Activated CD4-positive, alpha-beta T cell treated with anti-CD3 and anti-CD28 coated beads, Interleukin-2, amount 10 ng/mL, durations not matched to agents 24 days and 14 days (primary cell): ENCODE measurements at regions of chr5 and their contacts with region 1.

Region 1: GRCh38 chr5:73565139-73565968 is at the starts of genes ANKRA2 and UTP15:
- DNase-seq: peak; percentile 100
- H3K4me3 Mint-ChIP-seq: peak within 1 kb of the TSS; percentile 100
- H3K27ac Mint-ChIP-seq: peak within 1 kb of the TSS; percentile 100
- H3K4me1 Mint-ChIP-seq: peaks cover 33% of the 10 kb centered on the region
- H3K27me3 Mint-ChIP-seq: peaks cover 2% of the 10 kb centered on the region
- total RNA-seq, gene ANKRA2: 18.5 and 19.7 TPM in 2 replicates
- total RNA-seq, gene UTP15: 59.3 and 61.5 TPM in 2 replicates

Region 2: DNA sequence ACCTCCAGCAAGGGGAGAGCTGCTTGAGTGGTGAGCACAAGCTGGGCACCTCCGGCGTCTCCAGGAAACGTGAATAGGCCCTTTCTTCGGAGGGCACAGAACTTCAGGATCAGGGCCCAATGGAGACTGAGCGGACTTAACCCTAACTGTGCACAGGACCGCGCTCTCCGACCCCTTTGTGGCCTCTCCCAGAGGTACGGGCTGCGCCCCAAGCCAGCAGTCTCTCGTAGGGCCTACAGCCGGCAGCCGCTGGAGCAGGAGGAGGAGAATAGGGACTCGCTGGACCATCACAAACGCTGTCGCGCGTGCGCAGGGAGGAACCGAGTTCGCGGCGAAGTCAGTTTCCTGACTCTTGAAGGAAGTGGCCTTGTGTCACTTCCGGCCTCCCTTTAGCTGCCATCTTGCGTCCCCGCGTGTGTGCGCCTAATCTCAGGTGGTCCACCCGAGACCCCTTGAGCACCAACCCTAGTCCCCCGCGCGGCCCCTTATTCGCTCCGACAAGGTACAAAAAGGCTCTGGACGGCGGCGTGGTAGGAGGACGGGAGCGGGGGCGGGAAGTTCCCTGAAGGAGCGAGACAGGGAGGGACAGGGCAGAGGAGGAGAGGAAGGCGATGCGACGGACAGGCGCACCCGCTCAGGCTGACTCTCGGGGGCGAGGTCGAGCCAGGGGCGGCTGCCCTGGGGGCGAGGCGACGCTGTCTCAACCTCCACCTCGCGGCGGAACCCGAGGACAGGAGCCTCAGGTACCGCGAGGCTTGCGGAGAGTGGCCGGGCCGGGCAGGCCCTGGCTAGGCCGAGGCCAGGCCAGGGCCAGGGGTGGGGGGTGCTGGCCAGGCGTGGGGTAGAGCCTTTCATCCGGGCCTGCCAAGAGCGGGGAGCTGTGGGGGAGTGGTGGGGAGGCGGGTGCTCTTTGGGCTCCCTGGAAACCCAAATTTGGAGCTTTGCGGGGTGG is 67.0 kb before region 1 on chr5 and contains the start of gene BTF3:
- intact Hi-C with region 1: loop called (anchors 1 kb)
- DNase-seq: peak; percentile 98
- H3K4me3 Mint-ChIP-seq: peak within 1 kb of the TSS; percentile 99
- H3K27ac Mint-ChIP-seq: peak within 1 kb of the TSS; percentile 100
- H3K4me1 Mint-ChIP-seq: peaks cover 30% of the 10 kb centered on the region
- H3K27me3 Mint-ChIP-seq: peaks cover 12% of the 10 kb centered on the region
- total RNA-seq, gene BTF3: 960 and 998 TPM in 2 replicates

Region 3: DNA sequence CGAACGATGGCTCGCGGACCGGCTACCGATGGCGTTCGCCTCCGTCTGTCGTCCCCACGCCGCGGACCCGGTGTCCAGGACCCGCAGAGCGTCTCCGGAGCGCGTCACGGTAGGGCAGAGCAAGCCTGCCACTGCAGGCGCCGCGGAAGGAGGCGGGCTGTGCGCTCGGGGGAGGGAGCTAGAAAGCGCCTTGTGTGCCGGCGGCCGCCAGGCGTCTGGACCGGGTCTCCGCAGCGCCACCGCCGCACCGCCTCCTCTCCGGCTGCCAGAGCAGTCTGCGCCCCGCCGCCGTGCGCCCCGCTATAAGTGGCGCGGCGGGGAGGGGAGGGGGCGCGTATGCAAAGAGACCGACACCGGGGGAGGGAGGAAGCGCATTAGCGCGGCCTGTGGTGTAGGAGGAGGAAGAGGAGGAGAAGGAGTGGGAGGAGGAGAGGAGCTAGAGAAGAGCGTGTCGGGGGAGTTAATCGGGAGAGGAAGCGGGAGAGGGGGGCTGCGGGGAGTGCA is 1075.1 kb after region 1 on chr5 and contains the start of gene ENC1:
- intact Hi-C with region 1: loop called (anchors 10 kb)
- DNase-seq: peak; percentile 93
- H3K4me3 Mint-ChIP-seq: peak within 1 kb of the TSS; percentile 91
- H3K27ac Mint-ChIP-seq: peak within 1 kb of the TSS; percentile 47
- H3K4me1 Mint-ChIP-seq: peaks cover 35% of the 10 kb centered on the region
- H3K27me3 Mint-ChIP-seq: peaks cover 63% of the 10 kb centered on the region
- total RNA-seq, gene ENC1: 1.2 and 2.0 TPM in 2 replicates

Region 4: DNA sequence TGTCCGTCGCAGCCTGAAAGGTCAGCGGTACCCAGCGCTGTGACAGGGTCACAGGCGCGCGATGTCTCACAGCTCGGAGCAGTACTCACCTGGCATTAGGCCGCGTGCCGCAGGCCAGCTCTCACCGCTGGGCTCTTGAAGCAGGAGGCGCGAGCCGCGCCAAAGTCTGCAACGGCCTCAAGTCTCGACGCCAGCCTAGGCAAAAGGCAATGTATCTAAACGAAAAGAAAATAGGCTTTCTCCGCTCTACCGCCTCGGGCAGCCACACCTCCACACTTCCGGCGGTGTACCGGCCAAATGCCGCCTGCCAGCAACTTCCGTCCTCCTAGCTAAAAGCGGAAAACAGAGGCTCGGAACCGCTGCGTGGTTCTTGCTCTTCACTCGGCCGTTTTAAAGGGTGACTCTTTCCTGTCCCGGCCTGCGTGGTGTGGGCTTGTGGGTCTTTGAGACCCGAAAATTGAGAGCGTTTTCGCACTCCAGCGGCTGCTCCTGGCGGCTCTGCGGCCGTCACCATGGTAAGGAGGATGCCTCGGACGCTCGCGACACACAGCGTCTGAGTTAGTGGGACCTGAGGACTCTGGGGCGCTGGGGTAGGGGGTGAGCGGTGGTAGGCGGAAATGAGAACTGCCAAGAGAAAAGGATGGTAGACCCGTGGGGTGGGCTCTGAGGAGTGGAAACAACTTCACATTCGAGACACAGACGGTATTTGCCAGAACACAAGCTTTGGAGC is 1201.7 kb after region 1 on chr5 and contains the starts of genes GFM2 and NSA2:
- intact Hi-C with region 1: loop called (anchors 10 kb)
- DNase-seq: peak; percentile 98
- H3K4me3 Mint-ChIP-seq: peak within 1 kb of the TSS; percentile 99
- H3K27ac Mint-ChIP-seq: peak within 1 kb of the TSS; percentile 98
- H3K4me1 Mint-ChIP-seq: peaks cover 25% of the 10 kb centered on the region
- H3K27me3 Mint-ChIP-seq: no peaks in the 10 kb centered on the region
- total RNA-seq, gene GFM2: 37.9 and 42.7 TPM in 2 replicates
- total RNA-seq, gene NSA2: 94.0 and 95.8 TPM in 2 replicates